ENCODE measurements at regions of chr10 and their contacts with region 1.

Region 1: GRCh38 chr10:112195224-112195623 is 11.7 kb upstream of the GPAM start:
- DNase-seq: no peak
- ATAC-seq: no peak
- H3K4me3 ChIP-seq: no peak overlapping the region
- H3K27ac ChIP-seq: no peak overlapping the region
- H3K4me1 ChIP-seq: no peaks in the 10 kb centered on the region
- H3K27me3 ChIP-seq: no peaks in the 10 kb centered on the region
- CTCF ChIP-seq: no peak
- POLR2A ChIP-seq: no peak

Region 2: GRCh38 chr10:111872591-111872990 is 322.6 kb before region 1 on chr10:
- intact Hi-C with region 1: no loop called
- DNase-seq: no peak
- ATAC-seq: no peak
- H3K4me3 ChIP-seq: no peak overlapping the region
- H3K27ac ChIP-seq: no peak overlapping the region
- H3K4me1 ChIP-seq: no peaks in the 10 kb centered on the region
- H3K27me3 ChIP-seq: no peaks in the 10 kb centered on the region
- CTCF ChIP-seq: no peak
- POLR2A ChIP-seq: no peak

Region 3: DNA sequence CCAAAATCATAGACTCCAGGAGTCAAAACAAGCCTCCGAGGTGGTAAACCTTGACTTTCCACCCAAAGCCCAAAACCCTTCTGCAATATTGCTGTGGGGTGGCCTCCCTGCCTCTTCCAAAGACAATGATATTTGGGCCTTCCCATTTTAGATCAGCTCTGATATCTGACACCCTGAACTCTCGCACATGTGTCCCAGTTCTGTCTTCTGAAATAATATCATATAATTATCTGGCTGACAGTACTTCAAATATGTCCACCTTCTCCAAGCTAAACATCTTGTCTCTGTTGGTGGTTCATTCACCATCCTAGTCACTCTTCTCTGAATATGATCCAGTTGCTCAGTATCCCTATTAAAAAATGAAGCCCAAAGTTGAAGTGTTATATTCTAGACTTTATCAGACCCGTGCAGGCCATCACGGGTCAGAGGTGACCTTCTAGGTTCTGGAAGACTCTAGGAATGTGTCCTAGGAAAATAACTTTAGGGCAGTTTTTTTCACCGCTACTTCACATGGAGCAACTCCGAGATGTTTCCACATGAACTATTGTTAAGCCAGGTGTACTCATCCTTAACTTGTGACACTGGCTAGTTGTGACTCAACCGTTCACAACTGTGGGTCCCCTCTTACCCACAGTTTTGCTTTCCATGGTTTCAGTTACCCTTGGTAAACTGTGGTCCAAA is 94.3 kb after region 1 on chr10:
- intact Hi-C with region 1: loop called in 1 of 10 experiments (anchors 5 kb)
- DNase-seq: no peak
- ATAC-seq: no peak
- H3K4me3 ChIP-seq: no peak overlapping the region
- H3K27ac ChIP-seq: no peak overlapping the region
- H3K4me1 ChIP-seq: peaks cover 0 to 14% (median 1%) of the 10 kb centered on the region in 12 donors
- H3K27me3 ChIP-seq: no peaks in the 10 kb centered on the region
- CTCF ChIP-seq: no peak
- POLR2A ChIP-seq: no peak

Region 4: DNA sequence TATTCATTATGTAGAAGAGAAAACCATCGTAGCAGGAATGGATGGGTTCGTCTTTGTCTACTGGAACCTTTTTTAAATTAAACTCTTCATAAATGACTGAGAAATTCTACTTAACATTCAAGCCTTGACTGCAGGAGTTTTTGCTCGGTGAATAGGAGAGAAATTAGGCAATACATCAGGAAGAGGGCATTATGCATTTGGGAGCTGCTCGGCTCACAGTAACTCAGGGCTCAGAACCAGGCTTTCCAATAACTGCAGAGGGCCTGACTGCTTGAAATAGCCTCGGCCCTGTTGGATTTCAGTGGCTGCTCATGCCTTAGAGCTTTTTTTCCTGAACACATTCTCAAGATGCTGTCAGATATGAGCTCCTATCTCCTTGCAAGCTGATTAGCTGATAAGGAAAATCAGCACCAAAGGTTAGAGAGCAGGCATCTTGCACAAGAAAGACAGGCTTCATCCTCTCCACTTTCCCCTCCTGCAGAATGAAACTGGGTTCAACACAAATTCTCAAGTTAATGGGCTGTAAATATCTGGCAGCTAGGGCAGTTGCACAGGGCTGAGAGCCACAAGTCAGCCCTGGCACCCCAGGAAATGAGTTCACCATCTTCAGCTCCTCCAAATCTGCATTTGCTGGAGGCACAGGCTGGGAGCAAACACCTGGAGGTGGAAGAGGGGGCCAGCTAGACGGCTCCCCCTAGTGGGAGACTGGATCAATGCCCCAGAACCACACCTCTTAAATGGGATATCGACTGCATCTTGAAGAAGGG is 112.3 kb after region 1 on chr10:
- intact Hi-C with region 1: loop called in 2 of 10 experiments (anchors 10 kb)
- DNase-seq: peak in 2 of 5 donors; percentile 33 to 35
- ATAC-seq: peak in 3 of 4 donors; percentile 59 to 70 (median 65)
- H3K4me3 ChIP-seq: no peak overlapping the region
- H3K27ac ChIP-seq: no peak overlapping the region
- H3K4me1 ChIP-seq: no peaks in the 10 kb centered on the region
- H3K27me3 ChIP-seq: peaks cover 0 to 3% (median 0%) of the 10 kb centered on the region in 9 donors
- CTCF ChIP-seq: peak; percentile 44 to 78 (median 64)
- POLR2A ChIP-seq: no peak

Measured in heart left ventricle (tissue), 16 donors.